WTC11 (cell line): ENCODE measurements at regions of chr5 and their contacts with region 1.

Region 1: GRCh38 chr5:57779383-57780223 is 297.0 kb upstream of the ACTBL2 start:
- DNase-seq: peak; percentile 32
- ATAC-seq: peak; percentile 84
- H3K4me3 Mint-ChIP-seq: no peak overlapping the region
- H3K27ac Mint-ChIP-seq: no peak overlapping the region
- H3K4me1 Mint-ChIP-seq: peaks cover 18% of the 10 kb centered on the region
- H3K27me3 Mint-ChIP-seq: no peaks in the 10 kb centered on the region
- CTCF ChIP-seq: peak; percentile 45; the same call in 1 of the 2 replicates

Region 2: GRCh38 chr5:57349214-57349613 is 430.4 kb before region 1 on chr5:
- CTCF ChIA-PET with region 1: no interaction called
- POLR2A ChIA-PET with region 1: no interaction called
- DNase-seq: no peak
- ATAC-seq: no peak
- H3K4me3 Mint-ChIP-seq: no peak overlapping the region
- H3K27ac Mint-ChIP-seq: no peak overlapping the region
- H3K4me1 Mint-ChIP-seq: no peaks in the 10 kb centered on the region
- H3K27me3 Mint-ChIP-seq: no peaks in the 10 kb centered on the region
- CTCF ChIP-seq: no peak

Region 3: DNA sequence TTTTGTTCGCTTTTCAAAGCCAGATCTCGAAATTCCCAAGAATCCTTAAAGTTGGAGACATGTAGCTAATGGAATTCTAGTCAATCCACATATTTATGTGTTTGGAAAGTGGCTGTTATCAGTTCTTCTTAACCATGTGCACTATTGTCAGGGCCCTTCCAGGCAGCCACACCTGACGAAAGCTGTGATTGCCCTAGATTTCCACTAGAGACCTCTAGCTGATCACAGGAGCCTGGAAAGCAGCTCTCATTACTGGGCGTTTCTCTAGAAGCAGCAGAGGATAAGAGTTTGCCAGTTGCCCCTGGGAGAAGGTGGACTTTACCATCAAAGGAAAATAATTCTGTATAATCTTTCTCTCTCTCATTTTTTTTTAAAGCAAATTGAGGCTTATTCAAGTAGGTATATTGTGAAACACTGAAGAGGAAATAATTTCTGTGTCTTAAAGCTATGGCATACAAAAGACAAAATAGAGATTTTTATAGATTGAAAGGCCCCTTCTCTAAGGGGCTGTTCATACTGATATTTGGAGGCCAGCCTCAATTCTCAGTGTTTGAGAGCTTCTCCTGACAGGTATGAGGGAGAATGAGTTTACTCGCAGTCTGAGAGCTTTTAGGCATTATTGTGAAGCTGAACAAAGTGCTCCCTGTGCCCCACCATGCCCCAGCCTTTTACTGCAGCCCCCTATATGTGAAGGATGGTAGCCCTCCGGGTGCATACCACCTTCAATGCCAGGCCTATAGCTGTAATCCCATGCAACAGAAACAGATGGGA is 108.4 kb after region 1 on chr5:
- CTCF ChIA-PET with region 1: interaction called, 20 read pairs
- POLR2A ChIA-PET with region 1: no interaction called
- DNase-seq: peak; percentile 35
- ATAC-seq: peak; percentile 85
- H3K4me3 Mint-ChIP-seq: no peak overlapping the region
- H3K27ac Mint-ChIP-seq: no peak overlapping the region
- H3K4me1 Mint-ChIP-seq: peaks cover 44% of the 10 kb centered on the region
- H3K27me3 Mint-ChIP-seq: no peaks in the 10 kb centered on the region
- CTCF ChIP-seq: no peak

Region 4: DNA sequence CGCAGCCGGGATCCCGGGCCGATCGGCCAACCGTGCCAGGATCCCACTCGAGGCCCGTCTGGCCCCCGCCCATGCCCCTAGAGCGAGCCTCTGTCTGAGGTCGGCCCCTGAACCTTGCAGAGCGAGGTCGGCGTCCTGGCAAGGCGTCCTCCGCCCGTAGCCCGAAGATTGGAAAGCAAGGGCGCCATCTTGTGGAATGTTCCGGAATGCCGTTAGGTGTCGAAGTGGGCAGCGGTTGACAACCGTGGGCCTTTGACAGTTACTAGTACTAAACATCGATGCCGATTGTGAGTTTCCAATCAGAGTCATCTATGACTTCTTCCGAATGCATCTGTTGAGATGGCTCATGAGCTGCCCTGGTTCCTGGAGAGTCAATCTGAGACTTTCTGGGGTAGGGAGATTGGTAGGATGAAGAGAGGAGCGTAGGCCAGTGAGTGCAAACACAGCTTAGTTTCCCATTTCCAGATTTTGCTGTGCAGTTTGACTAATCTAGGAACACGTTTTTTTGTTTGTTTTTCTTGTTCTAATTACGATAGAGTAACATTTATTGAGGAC is 681.2 kb after region 1 on chr5:
- CTCF ChIA-PET with region 1: interaction called, 65 read pairs
- POLR2A ChIA-PET with region 1: interaction called, 4 read pairs
- DNase-seq: peak; percentile 92
- ATAC-seq: peak; percentile 73
- H3K4me3 Mint-ChIP-seq: peak overlapping the region; percentile 49
- H3K27ac Mint-ChIP-seq: peak overlapping the region; percentile 24; the same call in 1 of the 2 replicates
- H3K4me1 Mint-ChIP-seq: peaks cover 34% of the 10 kb centered on the region
- H3K27me3 Mint-ChIP-seq: peaks cover 2% of the 10 kb centered on the region
- CTCF ChIP-seq: peak; percentile 59